ENCODE measurements at regions of chr1 and their contacts with region 1.

Region 1: GRCh38 chr1:211514030-211514754 is 22.2 kb upstream of the RD3 start:
- DNase-seq: peak; percentile 89
- H3K4me3 ChIP-seq: no peak overlapping the region
- H3K27ac ChIP-seq: peak overlapping the region; percentile 83 to 88 (median 85)
- H3K4me1 ChIP-seq: peaks cover 7 to 31% (median 26%) of the 10 kb centered on the region in 4 donors
- H3K27me3 ChIP-seq: no peaks in the 10 kb centered on the region
- CTCF ChIP-seq: peak; percentile 70 to 84 (median 73)
- EP300 ChIP-seq: no peak
- POLR2A ChIP-seq: no peak

Region 2: DNA sequence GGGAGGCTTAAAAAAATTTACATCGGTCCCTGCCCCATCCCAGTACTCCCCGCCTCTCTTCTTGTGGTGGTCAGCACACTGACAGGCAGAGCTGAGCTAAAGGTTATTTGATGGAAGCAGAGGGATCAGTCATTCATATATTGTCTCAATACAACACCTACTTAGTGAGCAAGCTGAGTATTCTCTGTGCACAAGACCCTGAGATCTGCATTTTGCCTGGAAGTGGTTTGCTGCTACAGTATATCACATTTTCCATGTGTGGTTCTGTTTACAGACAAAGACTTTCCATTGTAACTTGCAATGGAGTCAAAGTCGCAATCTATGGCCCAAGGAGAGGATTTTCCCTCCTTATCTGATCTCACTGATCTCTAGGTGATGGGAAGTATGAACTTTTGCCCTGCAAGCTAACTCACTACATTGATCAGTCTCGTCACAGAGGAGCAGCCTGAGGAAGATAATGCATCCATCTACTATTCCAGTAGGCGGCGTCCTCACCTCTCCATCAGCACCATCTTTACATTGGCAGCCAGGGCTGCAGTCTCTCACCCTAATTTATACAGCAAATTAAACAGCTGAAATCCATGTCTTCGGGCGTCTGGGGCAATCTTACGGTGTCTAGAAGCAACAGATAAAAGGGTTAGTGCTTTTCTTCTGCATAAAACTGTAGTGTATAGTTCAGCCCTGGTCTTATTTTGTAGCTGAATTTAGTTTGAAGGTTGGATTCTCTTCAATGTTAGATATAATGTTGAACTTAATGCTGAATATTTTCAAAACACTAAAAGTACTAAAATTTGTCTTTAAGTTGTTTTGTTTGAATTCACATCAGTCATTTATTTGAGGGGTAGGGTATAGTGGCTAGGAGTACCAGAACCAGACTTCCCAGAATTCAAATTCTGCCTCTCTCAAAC is 190.8 kb before region 1 on chr1:
- in situ Hi-C with region 1: loop called in 2 of 4 experiments (anchors 10 to 25 kb)
- intact Hi-C with region 1: no loop called
- DNase-seq: peak; percentile 68
- H3K4me3 ChIP-seq: no peak overlapping the region
- H3K27ac ChIP-seq: no peak overlapping the region
- H3K4me1 ChIP-seq: peaks cover 0 to 21% (median 18%) of the 10 kb centered on the region in 4 donors
- H3K27me3 ChIP-seq: no peaks in the 10 kb centered on the region
- CTCF ChIP-seq: peak; percentile 74 to 83 (median 81)
- EP300 ChIP-seq: no peak
- POLR2A ChIP-seq: no peak